CD8-positive, alpha-beta T cell (primary cell): ENCODE measurements at regions of chr19 and their contacts with region 1.

Region 1: GRCh38 chr19:35140962-35141637 is 2.0 kb upstream of the FXYD7 start:
- DNase-seq: peak; percentile 91 to 96 (median 94)
- ATAC-seq: peak; percentile 88
- H3K4me3 ChIP-seq: peak overlapping the region; percentile 16 to 43
- H3K4me3 Mint-ChIP-seq: peak overlapping the region; percentile 82
- H3K27ac ChIP-seq: no peak overlapping the region
- H3K27ac Mint-ChIP-seq: peak overlapping the region; percentile 85
- H3K4me1 ChIP-seq: peaks cover 43% of the 10 kb centered on the region
- H3K4me1 Mint-ChIP-seq: peaks cover 40% of the 10 kb centered on the region
- H3K27me3 ChIP-seq: peaks cover 0 to 2% of the 10 kb centered on the region in 2 experiments
- H3K27me3 Mint-ChIP-seq: no peaks in the 10 kb centered on the region
- CTCF ChIP-seq: peak; percentile 32

Region 2: GRCh38 chr19:34938886-34939285 is 202.2 kb before region 1 on chr19:
- CTCF ChIA-PET with region 1: no interaction called
- POLR2A ChIA-PET with region 1: no interaction called
- intact Hi-C with region 1: no loop called
- DNase-seq: no peak
- ATAC-seq: no peak
- H3K4me3 ChIP-seq: no peak overlapping the region
- H3K4me3 Mint-ChIP-seq: no peak overlapping the region
- H3K27ac ChIP-seq: no peak overlapping the region
- H3K27ac Mint-ChIP-seq: no peak overlapping the region
- H3K4me1 ChIP-seq: no peaks in the 10 kb centered on the region
- H3K4me1 Mint-ChIP-seq: no peaks in the 10 kb centered on the region
- H3K27me3 ChIP-seq: no peaks in the 10 kb centered on the region
- H3K27me3 Mint-ChIP-seq: no peaks in the 10 kb centered on the region
- CTCF ChIP-seq: no peak

Region 3: GRCh38 chr19:34974646-34975045 is 166.5 kb before region 1 on chr19:
- CTCF ChIA-PET with region 1: interaction called, 4 read pairs
- POLR2A ChIA-PET with region 1: no interaction called
- intact Hi-C with region 1: loop called (anchors 2 to 5 kb)
- DNase-seq: peak in 1 of 9 experiments; percentile 20
- ATAC-seq: no peak
- H3K4me3 ChIP-seq: no peak overlapping the region
- H3K4me3 Mint-ChIP-seq: no peak overlapping the region
- H3K27ac ChIP-seq: no peak overlapping the region
- H3K27ac Mint-ChIP-seq: peak overlapping the region; percentile 89
- H3K4me1 ChIP-seq: peaks cover 25% of the 10 kb centered on the region
- H3K4me1 Mint-ChIP-seq: peaks cover 29% of the 10 kb centered on the region
- H3K27me3 ChIP-seq: no peaks in the 10 kb centered on the region
- H3K27me3 Mint-ChIP-seq: no peaks in the 10 kb centered on the region
- CTCF ChIP-seq: no peak

Region 4: GRCh38 chr19:35114353-35115176 is 26.5 kb before region 1 on chr19:
- CTCF ChIA-PET with region 1: interaction called, 7 read pairs
- POLR2A ChIA-PET with region 1: no interaction called
- intact Hi-C with region 1: loop called in 1 of 2 experiments (anchors 1 kb)
- DNase-seq: peak; percentile 41 to 83 (median 74)
- ATAC-seq: peak; percentile 97
- H3K4me3 ChIP-seq: no peak overlapping the region
- H3K4me3 Mint-ChIP-seq: no peak overlapping the region
- H3K27ac ChIP-seq: no peak overlapping the region
- H3K27ac Mint-ChIP-seq: no peak overlapping the region
- H3K4me1 ChIP-seq: peaks cover 9% of the 10 kb centered on the region
- H3K4me1 Mint-ChIP-seq: peaks cover 5% of the 10 kb centered on the region
- H3K27me3 ChIP-seq: peaks cover 0 to 2% of the 10 kb centered on the region in 2 experiments
- H3K27me3 Mint-ChIP-seq: no peaks in the 10 kb centered on the region
- CTCF ChIP-seq: peak; percentile 92

Region 5: DNA sequence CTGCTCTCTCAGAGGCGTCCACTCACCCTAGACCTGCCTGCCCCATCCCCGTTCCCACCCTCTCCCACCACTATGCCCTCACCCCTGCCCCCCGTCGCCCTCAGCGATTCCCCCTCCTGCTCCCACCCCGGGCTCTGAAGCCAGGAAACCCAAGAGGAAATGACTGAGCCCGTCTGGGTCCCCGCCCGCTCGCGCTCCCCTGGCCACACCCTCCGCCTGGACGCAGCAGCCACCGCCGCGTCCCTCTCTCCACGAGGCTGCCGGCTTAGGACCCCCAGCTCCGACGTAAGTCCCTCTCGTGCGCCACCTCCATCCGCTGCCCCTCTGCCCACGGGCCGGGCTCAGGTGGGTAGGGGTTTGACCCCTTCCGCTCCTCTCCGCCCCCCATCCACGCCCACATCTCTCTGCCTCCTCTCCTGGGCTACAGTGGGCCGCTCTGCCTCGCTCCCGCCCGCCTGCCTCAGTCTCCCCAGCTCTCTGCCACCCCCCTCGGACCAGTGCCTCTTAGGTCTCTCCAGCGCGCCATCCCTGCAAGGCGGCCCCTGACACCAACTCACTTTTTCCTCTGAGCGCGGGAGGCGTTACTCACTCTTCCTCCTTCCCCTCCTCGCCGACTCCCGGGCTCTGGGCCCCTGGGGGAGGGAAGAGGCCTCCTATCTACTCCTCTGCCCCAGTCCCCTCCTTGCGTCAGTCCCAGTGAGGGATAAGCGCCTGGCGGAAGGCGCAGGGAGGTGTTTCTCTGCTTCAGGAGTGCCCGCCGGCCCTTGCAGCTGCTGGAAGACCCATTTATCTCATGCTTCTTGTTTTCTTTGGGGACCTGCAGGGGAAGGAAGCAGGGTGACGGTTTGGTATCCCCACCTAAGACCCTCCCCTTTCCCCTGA is 13.7 kb after region 1 on chr19 and contains the start of gene FXYD5:
- CTCF ChIA-PET with region 1: interaction called, 32 read pairs
- POLR2A ChIA-PET with region 1: interaction called, 12 read pairs
- intact Hi-C with region 1: loop called (anchors 1 kb)
- DNase-seq: peak; percentile 48 to 82 (median 76)
- ATAC-seq: peak; percentile 75
- H3K4me3 ChIP-seq: peak within 1 kb of the TSS; percentile 84 to 99
- H3K4me3 Mint-ChIP-seq: peak within 1 kb of the TSS; percentile 100
- H3K27ac ChIP-seq: peak within 1 kb of the TSS; percentile 89 to 93
- H3K27ac Mint-ChIP-seq: peak within 1 kb of the TSS; percentile 98
- H3K4me1 ChIP-seq: peaks cover 37% of the 10 kb centered on the region
- H3K4me1 Mint-ChIP-seq: peaks cover 53% of the 10 kb centered on the region
- H3K27me3 ChIP-seq: no peaks in the 10 kb centered on the region
- H3K27me3 Mint-ChIP-seq: no peaks in the 10 kb centered on the region
- CTCF ChIP-seq: no peak
- total RNA-seq, gene FXYD5: 426 to 440 TPM

Region 6: GRCh38 chr19:35213663-35214632 is 72.8 kb after region 1 on chr19:
- CTCF ChIA-PET with region 1: interaction called, 16 read pairs
- POLR2A ChIA-PET with region 1: interaction called, 5 read pairs
- intact Hi-C with region 1: loop called (anchors 1 kb)
- DNase-seq: peak; percentile 60 to 97 (median 80)
- ATAC-seq: peak; percentile 34
- H3K4me3 ChIP-seq: no peak overlapping the region
- H3K4me3 Mint-ChIP-seq: peak overlapping the region; percentile 65
- H3K27ac ChIP-seq: peak overlapping the region; percentile 96 to 97
- H3K27ac Mint-ChIP-seq: peak overlapping the region; percentile 100
- H3K4me1 ChIP-seq: peaks cover 56% of the 10 kb centered on the region
- H3K4me1 Mint-ChIP-seq: peaks cover 64% of the 10 kb centered on the region
- H3K27me3 ChIP-seq: no peaks in the 10 kb centered on the region
- H3K27me3 Mint-ChIP-seq: no peaks in the 10 kb centered on the region
- CTCF ChIP-seq: no peak

Region 7: DNA sequence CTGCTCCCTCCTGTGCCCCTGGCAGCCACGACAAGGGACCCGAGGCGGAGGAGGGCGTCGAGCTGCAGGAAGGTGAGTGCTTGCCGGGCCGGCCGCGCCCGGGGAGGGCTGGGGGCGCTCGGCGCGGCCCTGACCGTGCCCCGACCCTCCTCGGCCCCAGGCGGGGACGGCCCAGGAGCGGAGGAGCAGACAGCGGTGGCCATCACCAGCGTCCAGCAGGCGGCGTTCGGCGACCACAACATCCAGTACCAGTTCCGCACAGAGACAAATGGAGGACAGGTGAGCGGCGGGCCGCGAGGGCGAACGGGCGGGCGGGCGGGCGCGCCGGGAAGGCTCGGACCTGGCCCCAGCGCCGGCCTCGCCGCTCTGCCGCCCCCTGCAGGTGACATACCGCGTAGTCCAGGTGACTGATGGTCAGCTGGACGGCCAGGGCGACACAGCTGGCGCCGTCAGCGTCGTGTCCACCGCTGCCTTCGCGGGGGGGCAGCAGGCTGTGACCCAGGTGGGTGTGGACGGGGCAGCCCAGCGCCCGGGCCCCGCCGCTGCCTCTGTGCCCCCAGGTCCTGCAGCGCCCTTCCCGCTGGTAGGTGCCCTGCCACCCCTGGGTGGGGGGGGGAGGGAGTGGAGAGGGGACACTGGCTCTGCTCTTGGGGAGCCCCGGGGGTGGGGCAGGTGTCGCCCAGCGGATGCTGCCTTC is 128.5 kb after region 1 on chr19:
- CTCF ChIA-PET with region 1: interaction called, 6 read pairs
- POLR2A ChIA-PET with region 1: interaction called, 14 read pairs
- intact Hi-C with region 1: loop called (anchors 1 to 2 kb)
- DNase-seq: peak; percentile 57 to 88 (median 78)
- ATAC-seq: peak; percentile 47
- H3K4me3 ChIP-seq: peak overlapping the region in 1 of 2 experiments; percentile 62
- H3K4me3 Mint-ChIP-seq: peak overlapping the region; percentile 75
- H3K27ac ChIP-seq: no peak overlapping the region
- H3K27ac Mint-ChIP-seq: peak overlapping the region; percentile 80
- H3K4me1 ChIP-seq: peaks cover 25% of the 10 kb centered on the region
- H3K4me1 Mint-ChIP-seq: peaks cover 45% of the 10 kb centered on the region
- H3K27me3 ChIP-seq: no peaks in the 10 kb centered on the region
- H3K27me3 Mint-ChIP-seq: no peaks in the 10 kb centered on the region
- CTCF ChIP-seq: peak; percentile 64

Region 8: DNA sequence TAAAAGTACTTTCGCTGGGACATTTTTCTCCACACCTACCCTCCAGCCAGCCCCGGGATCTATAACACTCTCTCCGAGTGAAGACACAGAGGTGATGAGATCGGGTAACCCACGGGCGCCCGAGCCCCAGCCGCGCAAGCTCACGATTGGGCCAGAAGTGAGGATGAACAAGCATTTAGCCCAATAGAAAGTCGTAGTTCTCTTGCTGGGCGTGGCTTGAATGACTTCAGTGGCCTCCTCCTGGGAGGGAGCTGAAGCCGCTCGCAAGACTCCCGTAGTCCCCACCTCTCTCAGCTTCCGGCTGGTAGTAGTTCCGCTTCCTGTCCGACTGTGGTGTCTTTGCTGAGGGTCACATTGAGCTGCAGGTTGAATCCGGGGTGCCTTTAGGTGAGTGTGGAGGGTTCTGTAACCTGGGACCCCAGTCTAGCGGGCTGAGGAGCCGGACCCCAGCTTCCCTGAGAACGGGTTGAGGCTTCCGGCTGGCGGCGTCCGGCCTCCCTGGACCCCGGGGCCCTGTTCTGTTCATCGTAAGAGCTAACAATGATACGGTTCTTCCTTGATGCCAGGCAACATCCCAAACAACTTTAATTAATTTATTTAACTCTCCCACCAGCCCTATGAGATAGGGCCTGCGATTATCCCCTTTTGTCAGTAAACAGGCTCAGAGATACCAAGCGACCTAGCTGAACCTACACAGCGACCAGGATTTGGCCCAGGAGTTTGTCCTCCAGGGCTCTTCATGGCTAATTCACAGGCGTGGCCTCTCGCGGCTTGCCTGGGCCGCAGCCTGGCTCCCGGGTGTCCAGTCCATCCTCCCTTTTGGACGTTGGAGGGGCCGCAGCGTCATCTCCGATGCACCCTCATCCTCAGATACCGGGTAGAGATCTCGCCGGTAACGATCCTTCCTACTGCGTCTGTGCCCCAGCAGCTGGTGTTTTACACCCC is 507.2 kb after region 1 on chr19 and contains the start of gene COX6B1:
- CTCF ChIA-PET with region 1: no interaction called
- POLR2A ChIA-PET with region 1: no interaction called
- intact Hi-C with region 1: loop called in 1 of 2 experiments (anchors 2 kb)
- DNase-seq: peak; percentile 83 to 98 (median 90)
- ATAC-seq: peak; percentile 72
- H3K4me3 ChIP-seq: peak within 1 kb of the TSS; percentile 70 to 82
- H3K4me3 Mint-ChIP-seq: peak within 1 kb of the TSS; percentile 99
- H3K27ac ChIP-seq: peak within 1 kb of the TSS; percentile 66 to 80
- H3K27ac Mint-ChIP-seq: peak within 1 kb of the TSS; percentile 97
- H3K4me1 ChIP-seq: peaks cover 32% of the 10 kb centered on the region
- H3K4me1 Mint-ChIP-seq: peaks cover 52% of the 10 kb centered on the region
- H3K27me3 ChIP-seq: no peaks in the 10 kb centered on the region
- H3K27me3 Mint-ChIP-seq: no peaks in the 10 kb centered on the region
- CTCF ChIP-seq: no peak
- total RNA-seq, gene COX6B1: 152 to 171 TPM